Naive thymus-derived CD4-positive, alpha-beta T cell (primary cell): ENCODE measurements at regions of chr6 and their contacts with region 1.

Region 1: GRCh38 chr6:399785-400534 is 8.4 kb downstream of the IRF4 start:
- DNase-seq: peak in 7 of 9 donors; percentile 27 to 66 (median 60)
- ATAC-seq: peak; percentile 76
- H3K4me3 ChIP-seq: no peak overlapping the region
- H3K4me3 Mint-ChIP-seq: peak overlapping the region in 8 of 10 donors; percentile 32 to 78 (median 56)
- H3K27ac ChIP-seq: no peak overlapping the region
- H3K27ac Mint-ChIP-seq: peak overlapping the region; percentile 41 to 84 (median 77)
- H3K4me1 ChIP-seq: peaks cover 8 to 29% of the 10 kb centered on the region in 2 donors
- H3K4me1 Mint-ChIP-seq: peaks cover 19 to 92% (median 49%) of the 10 kb centered on the region in 7 donors
- H3K27me3 ChIP-seq: no peaks in the 10 kb centered on the region
- H3K27me3 Mint-ChIP-seq: no peaks in the 10 kb centered on the region

Region 2: GRCh38 chr6:379367-380181 is 20.4 kb before region 1 on chr6:
- CTCF ChIA-PET with region 1: no interaction called
- POLR2A ChIA-PET with region 1: no interaction called
- intact Hi-C with region 1: no loop called
- DNase-seq: no peak
- ATAC-seq: peak; percentile 25
- H3K4me3 ChIP-seq: no peak overlapping the region
- H3K4me3 Mint-ChIP-seq: peak overlapping the region in 1 of 10 donors; percentile 3
- H3K27ac ChIP-seq: no peak overlapping the region
- H3K27ac Mint-ChIP-seq: no peak overlapping the region
- H3K4me1 ChIP-seq: no peaks in the 10 kb centered on the region
- H3K4me1 Mint-ChIP-seq: peaks cover 5 to 20% (median 9%) of the 10 kb centered on the region in 7 donors
- H3K27me3 ChIP-seq: no peaks in the 10 kb centered on the region
- H3K27me3 Mint-ChIP-seq: peaks cover 11 to 57% (median 29%) of the 10 kb centered on the region in 5 donors

Region 3: DNA sequence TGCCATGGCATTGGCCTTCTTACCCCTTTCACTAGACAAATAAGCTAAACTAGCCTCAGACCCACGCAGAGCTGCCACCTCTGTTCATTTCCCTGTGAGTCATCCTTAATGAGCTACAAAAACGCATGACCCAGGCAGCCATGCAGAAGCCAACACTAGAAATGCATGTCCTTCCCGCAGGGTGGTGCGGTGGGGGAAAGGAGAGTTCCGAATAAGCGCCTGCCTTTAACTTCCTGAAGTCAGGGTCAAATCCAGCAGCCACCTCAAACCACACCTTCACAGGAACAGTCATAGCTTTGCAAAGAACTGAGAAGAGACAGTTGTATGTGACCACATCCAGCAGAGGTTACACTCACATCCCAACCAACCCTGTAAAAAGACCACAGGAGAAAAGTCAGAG is 32.0 kb after region 1 on chr6:
- CTCF ChIA-PET with region 1: interaction called, 3 read pairs
- POLR2A ChIA-PET with region 1: interaction called, 4 read pairs
- intact Hi-C with region 1: loop called in 1 of 2 experiments (anchors 2 kb)
- DNase-seq: peak in 1 of 9 donors; percentile 68
- ATAC-seq: no peak
- H3K4me3 ChIP-seq: no peak overlapping the region
- H3K4me3 Mint-ChIP-seq: peak overlapping the region in 1 of 10 donors; percentile 40
- H3K27ac ChIP-seq: no peak overlapping the region
- H3K27ac Mint-ChIP-seq: peak overlapping the region in 2 of 9 donors; percentile 76 to 82
- H3K4me1 ChIP-seq: peaks cover 9 to 12% of the 10 kb centered on the region in 2 donors
- H3K4me1 Mint-ChIP-seq: peaks cover 22 to 71% (median 36%) of the 10 kb centered on the region in 7 donors
- H3K27me3 ChIP-seq: no peaks in the 10 kb centered on the region
- H3K27me3 Mint-ChIP-seq: no peaks in the 10 kb centered on the region

Region 4: DNA sequence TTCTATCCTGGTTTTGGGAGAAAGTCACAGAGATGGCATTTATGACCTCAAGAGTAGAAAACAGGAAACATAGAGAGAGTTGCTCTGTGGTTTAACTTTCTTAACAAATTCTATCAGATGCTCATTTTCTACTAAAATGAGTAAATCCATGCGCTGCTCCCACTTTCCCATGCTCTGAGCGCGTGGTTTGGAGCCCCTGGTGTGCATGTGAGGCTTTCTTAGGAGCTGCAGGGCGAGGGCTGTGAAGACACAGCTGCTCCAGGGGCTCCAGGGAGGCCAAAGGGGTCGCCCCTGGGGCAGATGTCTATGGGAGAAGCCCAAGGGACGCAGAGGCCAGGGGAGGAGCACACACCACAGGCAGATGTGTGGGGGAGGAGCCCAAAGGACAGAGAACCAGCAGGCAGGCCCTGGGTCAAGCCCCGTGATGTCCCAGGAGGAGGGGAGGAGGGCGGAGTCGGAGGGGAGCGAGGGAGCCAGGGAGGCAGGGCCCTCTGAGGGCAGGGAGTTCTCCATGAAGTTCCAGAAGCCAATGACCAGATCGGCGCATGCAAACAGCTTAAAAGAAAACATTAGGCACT is 114.5 kb after region 1 on chr6:
- CTCF ChIA-PET with region 1: no interaction called
- POLR2A ChIA-PET with region 1: no interaction called
- intact Hi-C with region 1: loop called in 1 of 2 experiments (anchors 5 kb)
- DNase-seq: no peak
- ATAC-seq: no peak
- H3K4me3 ChIP-seq: no peak overlapping the region
- H3K4me3 Mint-ChIP-seq: peak overlapping the region in 7 of 10 donors; percentile 9 to 63 (median 43)
- H3K27ac ChIP-seq: no peak overlapping the region
- H3K27ac Mint-ChIP-seq: peak overlapping the region in 8 of 9 donors; percentile 49 to 81 (median 70)
- H3K4me1 ChIP-seq: peaks cover 16 to 22% of the 10 kb centered on the region in 2 donors
- H3K4me1 Mint-ChIP-seq: peaks cover 32 to 66% (median 51%) of the 10 kb centered on the region in 7 donors
- H3K27me3 ChIP-seq: no peaks in the 10 kb centered on the region
- H3K27me3 Mint-ChIP-seq: no peaks in the 10 kb centered on the region

Region 5: GRCh38 chr6:558089-558488 is 158.1 kb after region 1 on chr6:
- CTCF ChIA-PET with region 1: no interaction called
- POLR2A ChIA-PET with region 1: no interaction called
- intact Hi-C with region 1: loop called in 1 of 2 experiments (anchors 5 kb)
- DNase-seq: peak in 3 of 9 donors; percentile 2 to 7 (median 6)
- ATAC-seq: no peak
- H3K4me3 ChIP-seq: no peak overlapping the region
- H3K4me3 Mint-ChIP-seq: peak overlapping the region in 5 of 10 donors; percentile 25 to 42 (median 33)
- H3K27ac ChIP-seq: no peak overlapping the region
- H3K27ac Mint-ChIP-seq: peak overlapping the region in 5 of 9 donors; percentile 9 to 62 (median 19)
- H3K4me1 ChIP-seq: peaks cover 0 to 11% of the 10 kb centered on the region in 2 donors
- H3K4me1 Mint-ChIP-seq: peaks cover 13 to 31% (median 27%) of the 10 kb centered on the region in 7 donors
- H3K27me3 ChIP-seq: no peaks in the 10 kb centered on the region
- H3K27me3 Mint-ChIP-seq: no peaks in the 10 kb centered on the region